ENCODE measurements at regions of chr17 and their contacts with region 1.

Region 1: GRCh38 chr17:27654654-27655524 is 23.9 kb downstream of the LGALS9 start:
- DNase-seq: peak; percentile 28 to 79 (median 59)
- ATAC-seq: peak; percentile 62
- H3K4me3 ChIP-seq: no peak overlapping the region
- H3K4me3 Mint-ChIP-seq: no peak overlapping the region
- H3K27ac ChIP-seq: no peak overlapping the region
- H3K27ac Mint-ChIP-seq: no peak overlapping the region
- H3K4me1 ChIP-seq: no peaks in the 10 kb centered on the region
- H3K4me1 Mint-ChIP-seq: no peaks in the 10 kb centered on the region
- H3K27me3 ChIP-seq: no peaks in the 10 kb centered on the region
- H3K27me3 Mint-ChIP-seq: peaks cover 3% of the 10 kb centered on the region
- CTCF ChIP-seq: peak; percentile 94

Region 2: GRCh38 chr17:27353461-27354050 is 301.3 kb before region 1 on chr17:
- CTCF ChIA-PET with region 1: interaction called, 3 read pairs
- POLR2A ChIA-PET with region 1: no interaction called
- intact Hi-C with region 1: loop called in 1 of 2 experiments (anchors 2 kb)
- DNase-seq: peak; percentile 67 to 94 (median 86)
- ATAC-seq: peak; percentile 95
- H3K4me3 ChIP-seq: peak overlapping the region; percentile 66 to 78
- H3K4me3 Mint-ChIP-seq: peak overlapping the region; percentile 77
- H3K27ac ChIP-seq: peak overlapping the region; percentile 68 to 84
- H3K27ac Mint-ChIP-seq: peak overlapping the region; percentile 93
- H3K4me1 ChIP-seq: peaks cover 18% of the 10 kb centered on the region
- H3K4me1 Mint-ChIP-seq: peaks cover 17% of the 10 kb centered on the region
- H3K27me3 ChIP-seq: no peaks in the 10 kb centered on the region
- H3K27me3 Mint-ChIP-seq: no peaks in the 10 kb centered on the region
- CTCF ChIP-seq: peak; percentile 91

Region 3: DNA sequence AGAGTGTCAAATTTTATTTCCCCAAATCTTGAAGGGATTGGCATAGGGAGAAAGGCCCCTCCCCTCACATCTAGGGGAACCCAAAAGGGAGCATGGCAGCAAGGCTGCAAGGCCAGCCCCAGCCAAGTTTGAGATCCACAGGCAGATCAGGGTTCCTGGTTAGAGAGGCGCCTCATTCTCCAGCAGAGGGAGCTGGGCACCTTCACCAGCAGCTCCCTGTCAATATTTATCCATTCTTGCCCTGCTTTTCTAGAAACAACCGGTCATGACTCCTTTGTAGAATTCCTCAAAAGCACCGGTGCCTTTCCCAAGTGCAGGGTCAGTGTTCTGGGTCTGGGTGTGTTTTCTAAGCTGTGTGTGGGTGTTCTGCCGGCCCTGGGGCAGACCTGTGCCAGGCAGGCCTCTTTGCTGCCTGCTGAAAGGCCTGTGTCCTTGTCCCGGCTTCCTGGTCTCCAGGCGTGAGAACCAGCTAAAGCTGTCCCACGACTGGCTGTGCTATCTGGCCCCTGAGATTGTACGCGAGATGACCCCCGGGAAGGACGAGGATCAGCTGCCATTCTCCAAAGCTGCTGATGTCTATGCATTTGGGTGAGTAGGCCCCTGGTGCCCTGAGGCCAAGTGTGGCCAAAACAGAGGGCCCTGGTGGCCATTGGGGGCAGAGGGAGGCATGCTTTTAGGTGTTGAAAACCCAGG is 45.1 kb before region 1 on chr17:
- CTCF ChIA-PET with region 1: interaction called, 181 read pairs
- POLR2A ChIA-PET with region 1: no interaction called
- intact Hi-C with region 1: loop called in 1 of 2 experiments (anchors 1 kb)
- DNase-seq: peak in 1 of 9 experiments; percentile 30
- ATAC-seq: no peak
- H3K4me3 ChIP-seq: no peak overlapping the region
- H3K4me3 Mint-ChIP-seq: no peak overlapping the region
- H3K27ac ChIP-seq: no peak overlapping the region
- H3K27ac Mint-ChIP-seq: no peak overlapping the region
- H3K4me1 ChIP-seq: no peaks in the 10 kb centered on the region
- H3K4me1 Mint-ChIP-seq: no peaks in the 10 kb centered on the region
- H3K27me3 ChIP-seq: no peaks in the 10 kb centered on the region
- H3K27me3 Mint-ChIP-seq: no peaks in the 10 kb centered on the region
- CTCF ChIP-seq: no peak

Region 4: GRCh38 chr17:27747462-27748359 is 92.8 kb after region 1 on chr17:
- CTCF ChIA-PET with region 1: no interaction called
- POLR2A ChIA-PET with region 1: no interaction called
- intact Hi-C with region 1: no loop called
- DNase-seq: peak in 1 of 9 experiments; percentile 31
- ATAC-seq: no peak
- H3K4me3 ChIP-seq: no peak overlapping the region
- H3K4me3 Mint-ChIP-seq: no peak overlapping the region
- H3K27ac ChIP-seq: no peak overlapping the region
- H3K27ac Mint-ChIP-seq: no peak overlapping the region
- H3K4me1 ChIP-seq: no peaks in the 10 kb centered on the region
- H3K4me1 Mint-ChIP-seq: no peaks in the 10 kb centered on the region
- H3K27me3 ChIP-seq: no peaks in the 10 kb centered on the region
- H3K27me3 Mint-ChIP-seq: no peaks in the 10 kb centered on the region
- CTCF ChIP-seq: no peak

Region 5: DNA sequence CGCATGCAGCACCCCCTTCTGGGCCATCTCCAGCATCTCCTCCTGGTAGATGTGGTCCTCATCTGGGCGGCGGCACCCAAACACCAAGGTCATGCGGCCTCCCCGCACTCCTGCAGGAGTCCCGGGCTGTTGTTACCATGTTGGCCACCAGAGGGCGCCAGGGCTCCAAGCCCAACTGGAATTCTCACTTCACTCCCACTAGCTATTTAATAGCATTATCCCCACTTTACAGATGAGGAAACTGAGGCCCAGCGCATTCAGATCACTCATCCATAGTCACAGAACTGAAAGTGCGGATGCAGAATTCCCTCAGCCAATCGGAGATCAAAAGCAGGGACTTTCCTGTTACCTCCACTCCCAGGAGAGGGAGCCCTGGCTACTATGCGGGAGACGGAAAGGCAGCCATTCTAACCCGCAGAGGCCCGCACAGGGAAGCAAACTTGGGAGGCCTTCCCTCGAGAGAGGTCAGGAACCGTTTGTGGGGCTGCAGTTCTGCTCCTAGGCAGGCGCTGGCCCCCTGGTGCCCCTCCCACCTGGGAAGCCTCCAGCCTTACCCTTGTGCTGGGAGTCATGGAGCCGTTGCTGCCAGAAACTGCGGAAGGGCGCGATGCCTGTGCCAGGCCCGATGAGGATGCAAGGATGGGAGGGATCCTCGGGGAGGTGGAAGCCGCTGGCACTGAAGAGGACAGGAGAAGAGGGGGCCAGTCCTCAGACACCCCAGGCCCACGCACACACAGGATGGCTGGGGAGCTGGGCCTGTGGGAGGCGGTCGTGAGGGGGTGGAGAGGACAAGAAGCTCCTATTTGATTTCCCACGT is 105.4 kb after region 1 on chr17:
- CTCF ChIA-PET with region 1: interaction called, 3 read pairs
- POLR2A ChIA-PET with region 1: no interaction called
- intact Hi-C with region 1: loop called in 1 of 2 experiments (anchors 1 kb)
- DNase-seq: peak; percentile 51 to 82 (median 67)
- ATAC-seq: peak; percentile 61
- H3K4me3 ChIP-seq: no peak overlapping the region
- H3K4me3 Mint-ChIP-seq: no peak overlapping the region
- H3K27ac ChIP-seq: no peak overlapping the region
- H3K27ac Mint-ChIP-seq: no peak overlapping the region
- H3K4me1 ChIP-seq: no peaks in the 10 kb centered on the region
- H3K4me1 Mint-ChIP-seq: no peaks in the 10 kb centered on the region
- H3K27me3 ChIP-seq: no peaks in the 10 kb centered on the region
- H3K27me3 Mint-ChIP-seq: no peaks in the 10 kb centered on the region
- CTCF ChIP-seq: peak; percentile 84

Region 6: GRCh38 chr17:27879987-27880608 is 225.2 kb after region 1 on chr17:
- CTCF ChIA-PET with region 1: interaction called, 3 read pairs
- POLR2A ChIA-PET with region 1: no interaction called
- intact Hi-C with region 1: loop called in 1 of 2 experiments (anchors 5 kb)
- DNase-seq: peak; percentile 32 to 75 (median 61)
- ATAC-seq: peak; percentile 75
- H3K4me3 ChIP-seq: no peak overlapping the region
- H3K4me3 Mint-ChIP-seq: no peak overlapping the region
- H3K27ac ChIP-seq: no peak overlapping the region
- H3K27ac Mint-ChIP-seq: no peak overlapping the region
- H3K4me1 ChIP-seq: peaks cover 17% of the 10 kb centered on the region
- H3K4me1 Mint-ChIP-seq: peaks cover 19% of the 10 kb centered on the region
- H3K27me3 ChIP-seq: no peaks in the 10 kb centered on the region
- H3K27me3 Mint-ChIP-seq: no peaks in the 10 kb centered on the region
- CTCF ChIP-seq: peak; percentile 66